Breast epithelium (tissue), 4 donors: ENCODE measurements at regions of chr10 and their contacts with region 1.

Region 1: GRCh38 chr10:114103284-114103683 is 59.6 kb downstream of the ADRB1 start:
- DNase-seq: no peak
- H3K4me3 ChIP-seq: no peak overlapping the region
- H3K27ac ChIP-seq: no peak overlapping the region
- H3K4me1 ChIP-seq: no peaks in the 10 kb centered on the region
- H3K27me3 ChIP-seq: no peaks in the 10 kb centered on the region
- CTCF ChIP-seq: peak in 2 of 3 donors; percentile 60 to 62
- POLR2A ChIP-seq: no peak

Region 2: DNA sequence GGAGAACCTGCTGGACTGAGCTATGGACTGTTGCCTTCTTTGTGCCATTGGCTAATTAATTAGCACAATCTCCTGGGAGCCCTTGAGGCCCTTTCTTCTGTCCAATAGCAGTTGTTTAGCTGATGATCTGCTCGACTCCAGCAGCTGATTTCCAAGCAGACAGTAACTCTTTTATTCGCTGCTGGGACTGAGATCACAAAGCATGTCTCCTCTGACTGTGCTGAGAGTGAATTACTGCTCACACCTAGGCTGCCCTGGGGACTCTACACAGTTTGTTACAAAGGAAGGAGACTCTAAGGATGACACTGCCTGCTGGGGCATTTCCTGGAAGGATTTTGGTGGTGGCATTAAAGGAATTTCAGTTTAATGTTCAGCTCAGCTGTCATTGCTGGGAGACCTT is 392.1 kb before region 1 on chr10:
- intact Hi-C with region 1: loop called (anchors 10 kb)
- DNase-seq: peak in 1 of 2 donors; percentile 25
- H3K4me3 ChIP-seq: no peak overlapping the region
- H3K27ac ChIP-seq: peak overlapping the region; percentile 49 to 64
- H3K4me1 ChIP-seq: peaks cover 0 to 15% of the 10 kb centered on the region in 2 donors
- H3K27me3 ChIP-seq: no peaks in the 10 kb centered on the region
- CTCF ChIP-seq: no peak
- POLR2A ChIP-seq: no peak

Region 3: DNA sequence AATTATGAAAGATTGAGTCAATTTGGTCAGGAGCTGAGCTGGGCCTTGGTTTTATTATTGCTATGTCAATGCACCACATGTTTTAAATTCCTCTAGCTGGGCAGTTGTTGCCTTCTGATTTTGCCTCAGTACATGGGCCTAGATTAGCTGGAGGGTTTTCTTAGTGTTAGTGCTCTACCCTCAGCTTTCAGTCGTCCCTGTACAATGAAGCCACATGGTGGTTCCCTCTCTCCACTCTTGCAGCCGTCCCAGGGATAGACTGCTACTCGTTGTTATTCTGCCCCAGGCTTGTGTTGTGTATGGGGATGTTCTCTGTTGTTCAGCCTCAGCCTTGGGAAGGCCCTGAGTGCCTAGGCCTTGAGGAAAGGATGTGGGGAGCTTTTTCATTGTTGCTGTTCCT is 211.8 kb before region 1 on chr10:
- intact Hi-C with region 1: no loop called
- DNase-seq: no peak
- H3K4me3 ChIP-seq: no peak overlapping the region
- H3K27ac ChIP-seq: no peak overlapping the region
- H3K4me1 ChIP-seq: no peaks in the 10 kb centered on the region
- H3K27me3 ChIP-seq: no peaks in the 10 kb centered on the region
- CTCF ChIP-seq: no peak
- POLR2A ChIP-seq: no peak